ENCODE measurements at regions of chr6 and their contacts with region 1.

Region 1: DNA sequence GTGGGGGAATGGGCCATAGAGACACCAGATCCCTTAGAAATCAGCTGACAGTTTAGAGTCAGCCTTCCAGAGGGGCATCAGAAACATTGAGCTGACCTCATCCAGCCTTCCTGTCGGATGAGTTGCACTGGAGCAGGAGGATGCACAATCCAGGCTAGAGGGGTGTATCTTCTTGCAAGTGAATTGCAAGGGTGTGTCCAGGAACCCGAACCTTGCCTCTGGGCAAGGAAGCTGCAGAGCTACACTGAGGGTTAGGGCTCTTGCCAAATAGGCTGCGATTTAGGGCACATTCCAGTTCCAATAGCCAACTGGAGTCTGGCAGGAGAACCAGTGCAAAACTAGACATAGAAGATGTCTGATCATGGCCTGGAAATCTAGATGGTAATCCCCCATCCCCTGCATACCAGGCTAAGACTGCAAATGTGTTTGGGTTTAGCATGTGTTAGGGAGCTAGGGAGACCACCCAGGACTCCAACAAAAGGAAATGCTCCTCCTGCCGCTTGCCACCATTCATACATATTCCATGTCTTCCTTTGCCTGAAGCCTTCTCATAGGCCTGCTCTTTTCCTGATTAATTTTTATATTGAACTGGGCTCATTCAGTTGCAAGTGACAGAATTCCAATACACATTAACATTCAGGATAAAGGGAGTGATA is 6.3 kb upstream of the UTRN start:
- DNase-seq: no peak
- H3K4me3 ChIP-seq: no peak overlapping the region
- H3K27ac ChIP-seq: no peak overlapping the region
- H3K4me1 ChIP-seq: peaks cover 0 to 6% (median 3%) of the 10 kb centered on the region in 4 donors
- H3K27me3 ChIP-seq: no peaks in the 10 kb centered on the region
- CTCF ChIP-seq: no peak
- EP300 ChIP-seq: no peak
- POLR2A ChIP-seq: no peak

Region 2: GRCh38 chr6:144075187-144075586 is 203.6 kb before region 1 on chr6:
- intact Hi-C with region 1: no loop called
- DNase-seq: no peak
- H3K4me3 ChIP-seq: no peak overlapping the region
- H3K27ac ChIP-seq: no peak overlapping the region
- H3K4me1 ChIP-seq: no peaks in the 10 kb centered on the region
- H3K27me3 ChIP-seq: no peaks in the 10 kb centered on the region
- CTCF ChIP-seq: no peak
- EP300 ChIP-seq: no peak
- POLR2A ChIP-seq: no peak

Region 3: GRCh38 chr6:144220031-144220790 is 58.6 kb before region 1 on chr6:
- intact Hi-C with region 1: loop called (anchors 10 kb)
- DNase-seq: no peak
- H3K4me3 ChIP-seq: no peak overlapping the region
- H3K27ac ChIP-seq: no peak overlapping the region
- H3K4me1 ChIP-seq: peaks cover 3 to 27% (median 16%) of the 10 kb centered on the region in 4 donors
- H3K27me3 ChIP-seq: no peaks in the 10 kb centered on the region
- CTCF ChIP-seq: no peak
- EP300 ChIP-seq: no peak
- POLR2A ChIP-seq: no peak